Ovary (tissue), 10 donors: ENCODE measurements at regions of chr19 and their contacts with region 1.

Region 1: GRCh38 chr19:33879818-33880575 is 83.3 kb downstream of the KCTD15 start:
- DNase-seq: peak; percentile 34 to 67 (median 47)
- H3K4me3 ChIP-seq: no peak overlapping the region
- H3K27ac ChIP-seq: peak overlapping the region in 1 of 2 donors; percentile 68
- H3K4me1 ChIP-seq: peaks cover 15% of the 10 kb centered on the region
- H3K27me3 ChIP-seq: no peaks in the 10 kb centered on the region
- CTCF ChIP-seq: no peak
- EP300 ChIP-seq: no peak
- POLR2A ChIP-seq: no peak

Region 2: GRCh38 chr19:33795370-33796163 is 84.4 kb before region 1 on chr19:
- intact Hi-C with region 1: loop called in 1 of 4 experiments (anchors 5 kb)
- DNase-seq: peak; percentile 87 to 94 (median 91)
- H3K4me3 ChIP-seq: peak overlapping the region; percentile 66
- H3K27ac ChIP-seq: peak overlapping the region; percentile 82 to 99
- H3K4me1 ChIP-seq: peaks cover 9% of the 10 kb centered on the region
- H3K27me3 ChIP-seq: no peaks in the 10 kb centered on the region
- CTCF ChIP-seq: peak; percentile 88 to 92 (median 89)
- EP300 ChIP-seq: peak; percentile 44
- POLR2A ChIP-seq: peak; percentile 66

Region 3: DNA sequence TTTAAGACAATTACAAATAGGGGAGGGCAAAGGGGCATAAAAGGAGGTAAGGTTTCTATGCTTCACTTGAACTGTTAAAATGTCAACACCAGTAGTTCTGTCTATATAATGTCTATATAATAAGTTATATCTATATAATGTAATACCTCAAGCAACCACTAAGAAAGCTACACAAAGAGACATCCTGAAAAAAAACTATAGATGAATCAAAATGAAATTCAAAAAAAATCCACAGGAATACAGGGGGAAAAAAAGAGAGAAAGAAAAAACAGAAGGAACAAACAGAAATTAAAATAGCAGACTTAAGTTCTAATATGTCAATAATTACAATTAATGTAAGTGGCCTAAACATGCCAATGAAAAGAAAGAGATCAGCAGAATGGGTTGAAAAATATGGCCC is 102.7 kb after region 1 on chr19:
- intact Hi-C with region 1: no loop called
- DNase-seq: no peak
- H3K4me3 ChIP-seq: no peak overlapping the region
- H3K27ac ChIP-seq: no peak overlapping the region
- H3K4me1 ChIP-seq: no peaks in the 10 kb centered on the region
- H3K27me3 ChIP-seq: no peaks in the 10 kb centered on the region
- CTCF ChIP-seq: no peak
- EP300 ChIP-seq: no peak
- POLR2A ChIP-seq: no peak